ENCODE measurements at regions of chr19 and their contacts with region 1.

Region 1: DNA sequence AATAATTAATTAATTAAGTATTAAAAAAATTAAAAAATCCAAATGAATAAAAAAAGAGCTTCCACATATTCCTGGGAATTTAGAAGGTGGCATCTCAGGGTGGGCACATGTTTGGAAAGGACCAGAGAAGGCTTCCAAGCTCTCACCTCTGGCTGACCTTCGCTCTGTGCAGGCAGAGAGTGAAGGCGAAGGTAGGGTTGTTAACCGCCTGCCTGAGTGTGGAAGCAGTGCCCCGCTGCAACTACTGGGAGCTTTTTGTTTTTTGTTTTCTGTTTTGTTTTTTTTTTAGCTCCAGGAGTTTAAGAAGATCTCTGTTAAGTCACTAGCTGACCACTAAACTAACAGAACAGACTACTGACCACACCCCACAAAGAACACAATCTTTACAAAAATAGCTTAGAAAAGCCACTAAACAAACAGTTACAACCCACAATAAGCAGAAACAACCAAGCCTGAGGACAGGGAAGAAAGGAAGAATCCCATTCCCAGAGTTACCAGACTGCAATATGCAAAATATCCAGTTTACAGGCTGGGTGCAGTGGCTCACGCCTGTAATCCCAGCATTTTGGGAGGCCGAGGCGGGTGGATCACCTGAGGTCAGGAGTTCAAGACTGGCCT is 11.4 kb downstream of the ZNF541 start:
- DNase-seq: no peak
- H3K4me3 ChIP-seq: no peak overlapping the region
- H3K27ac ChIP-seq: no peak overlapping the region
- H3K4me1 ChIP-seq: no peaks in the 10 kb centered on the region
- H3K27me3 ChIP-seq: no peaks in the 10 kb centered on the region
- CTCF ChIP-seq: no peak
- POLR2A ChIP-seq: no peak

Region 2: GRCh38 chr19:47483800-47484690 is 77.5 kb before region 1 on chr19 and contains the start of gene KPTN:
- intact Hi-C with region 1: no loop called
- DNase-seq: peak; percentile 81 to 86
- H3K4me3 ChIP-seq: peak within 1 kb of the TSS; percentile 58 to 84 (median 64)
- H3K27ac ChIP-seq: peak within 1 kb of the TSS; percentile 87 to 96
- H3K4me1 ChIP-seq: peaks cover 0 to 7% of the 10 kb centered on the region in 2 donors
- H3K27me3 ChIP-seq: no peaks in the 10 kb centered on the region
- CTCF ChIP-seq: peak; percentile 64 to 88 (median 86)
- POLR2A ChIP-seq: no peak
- total RNA-seq, gene KPTN: 4.6 to 6.6 (median 6.3) TPM

Region 3: GRCh38 chr19:47582320-47582909 is 20.9 kb after region 1 on chr19:
- intact Hi-C with region 1: loop called (anchors 2 kb)
- DNase-seq: no peak
- H3K4me3 ChIP-seq: peak overlapping the region in 2 of 3 donors; percentile 1 to 31
- H3K27ac ChIP-seq: peak overlapping the region; percentile 79 to 85
- H3K4me1 ChIP-seq: no peaks in the 10 kb centered on the region
- H3K27me3 ChIP-seq: no peaks in the 10 kb centered on the region
- CTCF ChIP-seq: no peak
- POLR2A ChIP-seq: no peak